ENCODE measurements at regions of chr5 and their contacts with region 1.

Region 1: GRCh38 chr5:142874537-142874936 is 104.4 kb downstream of the ARHGAP26 start:
- DNase-seq: no peak
- H3K4me3 ChIP-seq: no peak overlapping the region
- CTCF ChIP-seq: no peak

Region 2: GRCh38 chr5:142134331-142135010 is 740.1 kb before region 1 on chr5:
- in situ Hi-C with region 1: loop called (anchors 5 kb)
- DNase-seq: no peak
- H3K4me3 ChIP-seq: no peak overlapping the region
- CTCF ChIP-seq: no peak

Region 3: DNA sequence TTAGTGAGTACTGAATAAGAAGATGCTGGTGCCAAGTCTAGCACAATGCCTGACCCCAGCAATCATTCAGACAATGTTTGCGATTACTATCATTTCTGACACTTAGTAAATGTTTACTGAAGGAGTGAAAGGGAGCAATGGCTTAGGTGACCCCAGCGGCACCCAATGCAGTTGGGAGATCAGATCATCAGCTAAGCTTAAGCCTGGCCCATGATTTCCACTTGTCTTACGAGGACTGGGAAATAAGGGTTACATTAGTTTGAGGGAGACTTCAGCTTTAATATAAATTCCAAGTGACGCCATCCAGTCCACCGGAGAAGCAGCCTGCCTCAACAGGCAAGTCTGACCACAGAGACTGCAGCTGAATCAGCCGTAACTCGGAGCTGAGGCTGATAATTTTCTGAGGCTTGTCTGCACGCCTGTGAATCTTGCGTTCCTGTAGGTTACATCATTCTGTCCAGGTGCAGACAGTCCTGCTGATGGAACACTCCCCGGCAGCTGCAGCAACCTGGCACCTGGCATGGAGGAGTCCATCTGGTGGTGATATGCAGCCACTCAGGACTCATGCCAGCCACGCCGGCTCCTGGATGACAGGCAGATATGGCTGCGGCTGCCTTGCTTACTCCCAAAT is 153.8 kb before region 1 on chr5:
- in situ Hi-C with region 1: loop called (anchors 5 kb)
- DNase-seq: no peak
- H3K4me3 ChIP-seq: no peak overlapping the region
- CTCF ChIP-seq: no peak

Measured in astrocyte of the cerebellum (primary cell).